MCF 10A (cell line): ENCODE measurements at regions of chr7 and their contacts with region 1.

Region 1: GRCh38 chr7:37833107-37833817 is 15.1 kb upstream of the NME8 start:
- DNase-seq: peak; percentile 72
- H3K4me3 Mint-ChIP-seq: peak overlapping the region; percentile 53
- H3K27ac Mint-ChIP-seq: no peak overlapping the region
- H3K4me1 Mint-ChIP-seq: peaks cover 13% of the 10 kb centered on the region
- H3K27me3 Mint-ChIP-seq: no peaks in the 10 kb centered on the region
- CTCF ChIP-seq: peak; percentile 56

Region 2: DNA sequence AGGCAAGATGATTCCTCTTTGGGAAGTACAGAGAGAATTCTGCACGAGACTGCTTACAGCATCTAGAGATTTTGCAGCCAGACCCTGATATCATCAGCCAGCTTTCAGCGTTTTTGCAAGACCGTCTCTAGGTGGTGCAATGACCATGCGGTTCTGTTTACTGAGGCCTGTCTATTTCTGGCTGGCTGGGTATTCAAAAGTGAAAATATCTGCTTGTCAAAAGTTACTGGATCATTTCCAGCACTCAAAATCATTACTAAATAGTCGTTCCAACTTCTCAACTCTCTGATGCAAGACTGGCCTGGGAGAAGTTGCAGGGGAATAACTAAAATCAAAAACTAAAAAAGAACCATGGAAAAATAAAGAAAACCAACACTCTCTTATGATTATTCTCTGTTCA is 624.7 kb before region 1 on chr7:
- CTCF ChIA-PET with region 1: interaction called, 17 read pairs
- POLR2A ChIA-PET with region 1: interaction called, 3 read pairs
- intact Hi-C with region 1: loop called (anchors 1 kb)
- DNase-seq: peak; percentile 87
- H3K4me3 Mint-ChIP-seq: no peak overlapping the region
- H3K27ac Mint-ChIP-seq: no peak overlapping the region
- H3K4me1 Mint-ChIP-seq: peaks cover 16% of the 10 kb centered on the region
- H3K27me3 Mint-ChIP-seq: no peaks in the 10 kb centered on the region
- CTCF ChIP-seq: peak; percentile 49

Region 3: GRCh38 chr7:37510043-37510634 is 323.1 kb before region 1 on chr7:
- CTCF ChIA-PET with region 1: interaction called, 6 read pairs
- POLR2A ChIA-PET with region 1: interaction called, 3 read pairs
- intact Hi-C with region 1: loop called (anchors 5 kb)
- DNase-seq: peak; percentile 51
- H3K4me3 Mint-ChIP-seq: no peak overlapping the region
- H3K27ac Mint-ChIP-seq: no peak overlapping the region
- H3K4me1 Mint-ChIP-seq: no peaks in the 10 kb centered on the region
- H3K27me3 Mint-ChIP-seq: no peaks in the 10 kb centered on the region
- CTCF ChIP-seq: peak; percentile 63

Region 4: DNA sequence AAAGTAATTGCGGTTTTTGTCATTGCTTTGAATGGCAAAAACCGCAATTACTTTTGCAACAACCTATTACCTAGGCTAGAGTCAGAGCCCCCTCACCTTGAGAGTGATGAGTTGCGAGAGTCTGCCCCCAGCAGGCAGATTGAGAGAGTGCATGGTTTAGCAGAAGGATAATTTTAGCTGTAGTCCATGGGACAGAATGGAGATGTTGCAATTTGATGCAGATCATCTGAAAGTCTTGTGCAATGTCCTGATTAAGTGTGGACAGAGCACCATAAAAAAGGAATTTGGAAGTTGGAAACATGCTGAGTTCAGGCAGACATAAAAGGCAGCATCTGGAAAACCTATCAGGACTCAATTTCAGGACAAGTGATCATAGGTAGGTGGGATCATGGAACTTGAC is 101.0 kb before region 1 on chr7:
- CTCF ChIA-PET with region 1: interaction called, 97 read pairs
- POLR2A ChIA-PET with region 1: interaction called, 12 read pairs
- intact Hi-C with region 1: loop called (anchors 10 kb)
- DNase-seq: peak; percentile 97
- H3K4me3 Mint-ChIP-seq: peak overlapping the region; percentile 46
- H3K27ac Mint-ChIP-seq: peak overlapping the region; percentile 82
- H3K4me1 Mint-ChIP-seq: peaks cover 42% of the 10 kb centered on the region
- H3K27me3 Mint-ChIP-seq: no peaks in the 10 kb centered on the region
- CTCF ChIP-seq: peak; percentile 61

Region 5: GRCh38 chr7:37820708-37821468 is 12.4 kb before region 1 on chr7:
- CTCF ChIA-PET with region 1: interaction called, 15 read pairs
- POLR2A ChIA-PET with region 1: interaction called, 4 read pairs
- intact Hi-C with region 1: no loop called
- DNase-seq: no peak
- H3K4me3 Mint-ChIP-seq: no peak overlapping the region
- H3K27ac Mint-ChIP-seq: no peak overlapping the region
- H3K4me1 Mint-ChIP-seq: peaks cover 13% of the 10 kb centered on the region
- H3K27me3 Mint-ChIP-seq: no peaks in the 10 kb centered on the region
- CTCF ChIP-seq: no peak

Region 6: DNA sequence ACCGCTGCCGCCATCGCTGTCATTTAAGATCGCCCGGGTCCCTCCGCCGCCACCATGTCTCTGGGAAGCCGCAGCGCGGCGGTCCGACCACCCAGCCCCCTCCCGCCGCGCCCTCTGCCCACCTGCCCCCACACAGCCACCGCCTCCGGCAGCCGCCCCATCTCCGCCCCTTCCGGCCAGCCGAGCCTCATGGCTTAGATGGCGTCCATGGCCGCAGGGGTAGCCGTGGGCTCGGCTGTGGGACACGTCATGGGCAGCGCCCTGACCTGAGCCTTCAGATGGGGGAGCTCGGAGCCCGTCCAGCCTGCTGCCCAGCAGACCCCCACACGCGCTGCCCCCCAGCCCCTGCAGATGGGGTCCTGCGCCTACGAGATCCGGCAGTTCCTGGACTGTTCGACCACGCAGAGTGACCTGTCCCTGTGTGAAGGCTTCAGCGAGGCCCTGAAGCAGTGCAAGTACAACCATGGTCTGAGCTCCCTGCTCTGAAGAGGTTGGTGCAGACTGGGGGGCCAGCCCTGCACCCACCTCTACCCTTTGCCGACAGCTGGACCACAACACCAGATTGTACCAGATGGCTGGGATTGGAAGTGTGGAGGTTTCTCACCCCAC is 478.2 kb after region 1 on chr7:
- CTCF ChIA-PET with region 1: no interaction called
- POLR2A ChIA-PET with region 1: no interaction called
- intact Hi-C with region 1: no loop called
- DNase-seq: no peak
- H3K4me3 Mint-ChIP-seq: no peak overlapping the region
- H3K27ac Mint-ChIP-seq: no peak overlapping the region
- H3K4me1 Mint-ChIP-seq: no peaks in the 10 kb centered on the region
- H3K27me3 Mint-ChIP-seq: peaks cover 28% of the 10 kb centered on the region
- CTCF ChIP-seq: no peak